Naive thymus-derived CD4-positive, alpha-beta T cell (primary cell): ENCODE measurements at regions of chr12 and their contacts with region 1.

Region 1: DNA sequence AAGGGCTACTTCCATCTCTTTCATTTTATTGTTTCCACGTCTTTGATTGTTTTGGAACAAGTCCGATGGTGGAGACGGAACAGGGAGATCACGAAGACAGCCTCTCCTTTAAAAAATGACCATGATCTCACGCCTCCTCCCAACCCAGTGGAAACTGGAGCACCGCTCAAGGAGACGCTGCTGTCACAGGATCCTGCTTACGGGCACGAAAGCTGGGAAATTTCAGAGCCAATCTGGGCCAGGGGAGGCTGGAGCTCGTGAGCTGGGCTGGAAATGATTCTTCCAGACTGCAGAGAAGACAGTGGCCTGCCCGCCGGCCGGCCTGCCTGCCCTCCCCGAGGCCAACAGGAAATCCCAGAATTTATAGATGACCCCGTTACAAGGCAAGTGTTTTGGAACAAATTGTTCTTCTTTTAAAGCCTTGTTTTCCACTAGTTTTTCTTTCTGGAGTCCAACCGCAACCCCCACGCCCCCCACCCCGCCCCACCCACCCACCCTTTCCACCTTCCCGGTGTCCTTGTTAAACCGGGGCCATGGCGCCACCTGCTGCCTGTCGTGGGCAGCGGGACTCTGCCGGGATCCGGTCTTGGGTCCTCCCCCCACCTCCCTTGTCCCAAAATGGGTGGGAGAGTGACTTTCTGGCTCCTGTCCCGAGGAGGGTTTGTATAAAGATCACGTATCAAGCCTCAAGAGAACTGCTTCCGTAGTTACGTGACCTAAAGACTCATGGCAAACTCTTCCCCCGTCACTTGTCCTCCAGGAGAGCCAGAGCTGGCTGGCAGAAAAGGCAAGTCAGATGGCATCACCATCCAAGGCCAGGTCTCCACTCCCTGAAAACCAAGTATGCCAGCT is 40.3 kb downstream of the MAP1LC3B2 start:
- DNase-seq: peak; percentile 23 to 61 (median 39)
- ATAC-seq: peak; percentile 79
- H3K4me3 ChIP-seq: no peak overlapping the region
- H3K4me3 Mint-ChIP-seq: peak overlapping the region in 4 of 10 donors; percentile 12 to 36 (median 22)
- H3K27ac ChIP-seq: no peak overlapping the region
- H3K27ac Mint-ChIP-seq: peak overlapping the region in 1 of 9 donors; percentile 67
- H3K4me1 ChIP-seq: peaks cover 2 to 17% of the 10 kb centered on the region in 2 donors
- H3K4me1 Mint-ChIP-seq: peaks cover 16 to 48% (median 29%) of the 10 kb centered on the region in 7 donors
- H3K27me3 ChIP-seq: no peaks in the 10 kb centered on the region
- H3K27me3 Mint-ChIP-seq: peaks cover 0 to 5% (median 0%) of the 10 kb centered on the region in 5 donors

Region 2: DNA sequence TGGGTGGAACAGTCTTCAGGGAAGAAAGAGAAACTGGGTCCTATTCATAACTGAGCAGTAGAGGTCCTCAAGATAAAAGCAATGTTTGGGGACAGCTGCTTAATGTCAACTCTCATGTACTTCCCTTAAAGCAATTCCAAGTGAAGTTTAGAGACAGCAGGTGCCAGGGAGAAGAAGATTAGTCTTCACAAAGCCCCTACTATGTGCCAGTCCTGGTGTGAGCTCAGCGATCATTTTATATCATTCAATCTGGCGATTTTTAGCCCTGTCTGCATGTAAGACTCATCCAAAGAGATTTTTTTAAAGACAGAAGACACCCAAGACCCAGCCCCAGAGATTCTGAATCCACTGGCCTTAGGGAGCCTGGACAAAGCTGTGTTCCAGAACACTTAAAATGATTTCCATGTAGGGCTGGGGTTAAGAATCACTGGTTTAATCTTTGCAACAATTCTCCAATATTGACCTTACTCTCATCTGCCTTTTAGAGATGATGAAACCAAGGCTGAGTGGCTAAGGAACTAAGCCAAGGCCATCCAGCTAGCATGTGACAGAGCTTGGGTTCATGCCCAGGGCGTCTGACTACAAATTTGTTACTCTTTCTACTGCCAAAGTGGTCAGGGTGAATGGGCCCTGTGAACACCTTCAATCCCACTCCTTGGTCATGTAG is 1511.0 kb before region 1 on chr12:
- CTCF ChIA-PET with region 1: no interaction called
- POLR2A ChIA-PET with region 1: no interaction called
- intact Hi-C with region 1: no loop called
- DNase-seq: no peak
- ATAC-seq: no peak
- H3K4me3 ChIP-seq: no peak overlapping the region
- H3K4me3 Mint-ChIP-seq: no peak overlapping the region
- H3K27ac ChIP-seq: no peak overlapping the region
- H3K27ac Mint-ChIP-seq: no peak overlapping the region
- H3K4me1 ChIP-seq: no peaks in the 10 kb centered on the region
- H3K4me1 Mint-ChIP-seq: no peaks in the 10 kb centered on the region
- H3K27me3 ChIP-seq: no peaks in the 10 kb centered on the region
- H3K27me3 Mint-ChIP-seq: peaks cover 0 to 5% (median 0%) of the 10 kb centered on the region in 5 donors

Region 3: GRCh38 chr12:115998119-115998633 is 601.3 kb before region 1 on chr12:
- CTCF ChIA-PET with region 1: interaction called, 9 read pairs
- POLR2A ChIA-PET with region 1: no interaction called
- intact Hi-C with region 1: loop called (anchors 1 to 5 kb)
- DNase-seq: peak in 7 of 9 donors; percentile 13 to 49 (median 31)
- ATAC-seq: peak; percentile 72
- H3K4me3 ChIP-seq: no peak overlapping the region
- H3K4me3 Mint-ChIP-seq: no peak overlapping the region
- H3K27ac ChIP-seq: no peak overlapping the region
- H3K27ac Mint-ChIP-seq: peak overlapping the region in 5 of 9 donors; percentile 31 to 69 (median 46)
- H3K4me1 ChIP-seq: no peaks in the 10 kb centered on the region
- H3K4me1 Mint-ChIP-seq: peaks cover 0 to 26% (median 10%) of the 10 kb centered on the region in 7 donors
- H3K27me3 ChIP-seq: no peaks in the 10 kb centered on the region
- H3K27me3 Mint-ChIP-seq: no peaks in the 10 kb centered on the region

Region 4: GRCh38 chr12:116060764-116061163 is 538.7 kb before region 1 on chr12:
- CTCF ChIA-PET with region 1: no interaction called
- POLR2A ChIA-PET with region 1: no interaction called
- intact Hi-C with region 1: loop called in 1 of 2 experiments (anchors 2 kb)
- DNase-seq: peak in 6 of 9 donors; percentile 1 to 38 (median 26)
- ATAC-seq: peak; percentile 86
- H3K4me3 ChIP-seq: no peak overlapping the region
- H3K4me3 Mint-ChIP-seq: peak overlapping the region; percentile 16 to 81 (median 56)
- H3K27ac ChIP-seq: no peak overlapping the region
- H3K27ac Mint-ChIP-seq: peak overlapping the region in 7 of 9 donors; percentile 27 to 92 (median 48)
- H3K4me1 ChIP-seq: peaks cover 4 to 7% of the 10 kb centered on the region in 2 donors
- H3K4me1 Mint-ChIP-seq: peaks cover 14 to 72% (median 59%) of the 10 kb centered on the region in 7 donors
- H3K27me3 ChIP-seq: no peaks in the 10 kb centered on the region
- H3K27me3 Mint-ChIP-seq: no peaks in the 10 kb centered on the region

Region 5: DNA sequence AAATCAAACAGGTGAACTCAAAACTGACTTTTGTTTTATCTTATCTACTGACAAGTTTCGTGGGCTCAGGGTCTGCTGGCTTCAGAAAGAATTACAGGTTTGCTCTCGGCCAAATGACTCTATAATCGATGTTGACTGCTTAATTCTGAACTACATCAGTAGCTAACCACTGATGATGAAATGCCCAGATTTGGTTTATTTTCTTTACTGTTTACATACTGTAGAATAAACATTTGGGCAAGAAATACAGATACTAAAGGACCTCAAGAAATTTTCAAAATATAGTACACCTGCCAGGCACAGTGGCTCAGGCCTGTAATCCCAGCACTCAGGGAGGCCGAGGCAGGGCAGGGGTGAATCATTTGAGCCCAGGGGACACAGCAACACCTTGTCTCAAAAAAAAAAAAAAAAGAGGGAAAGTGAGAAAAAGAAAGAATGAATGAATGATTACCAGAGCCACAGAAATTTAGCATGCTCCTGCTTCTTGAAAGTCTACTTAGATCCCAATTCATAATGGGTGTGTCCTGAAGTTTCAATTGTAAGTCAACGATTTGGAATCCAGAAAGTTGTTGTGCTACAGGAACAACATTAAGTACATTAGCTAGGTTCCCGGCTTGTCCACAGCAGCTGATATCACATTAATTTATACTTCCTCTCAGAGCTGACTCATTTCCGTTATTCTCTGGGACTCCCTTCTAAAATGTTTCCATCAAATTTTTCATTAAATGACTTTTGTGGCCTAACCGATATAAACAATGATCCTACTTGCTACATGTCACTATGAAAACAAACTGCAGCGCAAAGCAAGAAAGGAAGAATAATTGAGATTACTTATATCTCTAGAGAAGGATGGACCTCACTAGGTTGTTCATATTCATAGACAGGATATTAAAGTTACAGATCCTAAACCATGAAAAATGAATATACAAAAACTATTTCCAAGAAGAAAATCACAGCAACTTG is 456.3 kb before region 1 on chr12:
- CTCF ChIA-PET with region 1: interaction called, 10 read pairs
- POLR2A ChIA-PET with region 1: interaction called, 3 read pairs
- intact Hi-C with region 1: loop called (anchors 1 kb)
- DNase-seq: no peak
- ATAC-seq: peak; percentile 63
- H3K4me3 ChIP-seq: no peak overlapping the region
- H3K4me3 Mint-ChIP-seq: peak overlapping the region in 7 of 10 donors; percentile 15 to 72 (median 51)
- H3K27ac ChIP-seq: no peak overlapping the region
- H3K27ac Mint-ChIP-seq: peak overlapping the region in 5 of 9 donors; percentile 1 to 45 (median 7)
- H3K4me1 ChIP-seq: peaks cover 11 to 21% of the 10 kb centered on the region in 2 donors
- H3K4me1 Mint-ChIP-seq: peaks cover 42 to 61% (median 52%) of the 10 kb centered on the region in 7 donors
- H3K27me3 ChIP-seq: no peaks in the 10 kb centered on the region
- H3K27me3 Mint-ChIP-seq: no peaks in the 10 kb centered on the region

Region 6: GRCh38 chr12:116508145-116509121 is 91.1 kb before region 1 on chr12:
- CTCF ChIA-PET with region 1: no interaction called
- POLR2A ChIA-PET with region 1: no interaction called
- intact Hi-C with region 1: loop called in 1 of 2 experiments (anchors 5 kb)
- DNase-seq: peak in 6 of 9 donors; percentile 10 to 26 (median 12)
- ATAC-seq: peak; percentile 57
- H3K4me3 ChIP-seq: no peak overlapping the region
- H3K4me3 Mint-ChIP-seq: peak overlapping the region; percentile 67 to 84 (median 71)
- H3K27ac ChIP-seq: no peak overlapping the region
- H3K27ac Mint-ChIP-seq: no peak overlapping the region
- H3K4me1 ChIP-seq: no peaks in the 10 kb centered on the region
- H3K4me1 Mint-ChIP-seq: peaks cover 0 to 9% (median 6%) of the 10 kb centered on the region in 7 donors
- H3K27me3 ChIP-seq: no peaks in the 10 kb centered on the region
- H3K27me3 Mint-ChIP-seq: peaks cover 0 to 46% (median 4%) of the 10 kb centered on the region in 5 donors

Region 7: GRCh38 chr12:116726694-116727093 is 127.2 kb after region 1 on chr12:
- CTCF ChIA-PET with region 1: no interaction called
- POLR2A ChIA-PET with region 1: no interaction called
- intact Hi-C with region 1: no loop called
- DNase-seq: no peak
- ATAC-seq: no peak
- H3K4me3 ChIP-seq: no peak overlapping the region
- H3K4me3 Mint-ChIP-seq: no peak overlapping the region
- H3K27ac ChIP-seq: no peak overlapping the region
- H3K27ac Mint-ChIP-seq: no peak overlapping the region
- H3K4me1 ChIP-seq: no peaks in the 10 kb centered on the region
- H3K4me1 Mint-ChIP-seq: peaks cover 4 to 43% (median 27%) of the 10 kb centered on the region in 7 donors
- H3K27me3 ChIP-seq: no peaks in the 10 kb centered on the region
- H3K27me3 Mint-ChIP-seq: no peaks in the 10 kb centered on the region